CD8-positive, alpha-beta memory T cell (primary cell): ENCODE measurements at regions of chr7 and their contacts with region 1.

Region 1: GRCh38 chr7:74401137-74401859 is 52.4 kb upstream of the GTF2IRD1 start:
- DNase-seq: peak; percentile 49 to 77 (median 59)
- H3K4me3 ChIP-seq: no peak overlapping the region
- H3K4me3 Mint-ChIP-seq: no peak overlapping the region
- H3K27ac ChIP-seq: no peak overlapping the region
- H3K27ac Mint-ChIP-seq: no peak overlapping the region
- H3K4me1 ChIP-seq: no peaks in the 10 kb centered on the region
- H3K4me1 Mint-ChIP-seq: peaks cover 0 to 2% (median 0%) of the 10 kb centered on the region in 3 donors
- H3K27me3 ChIP-seq: no peaks in the 10 kb centered on the region
- H3K27me3 Mint-ChIP-seq: no peaks in the 10 kb centered on the region

Region 2: DNA sequence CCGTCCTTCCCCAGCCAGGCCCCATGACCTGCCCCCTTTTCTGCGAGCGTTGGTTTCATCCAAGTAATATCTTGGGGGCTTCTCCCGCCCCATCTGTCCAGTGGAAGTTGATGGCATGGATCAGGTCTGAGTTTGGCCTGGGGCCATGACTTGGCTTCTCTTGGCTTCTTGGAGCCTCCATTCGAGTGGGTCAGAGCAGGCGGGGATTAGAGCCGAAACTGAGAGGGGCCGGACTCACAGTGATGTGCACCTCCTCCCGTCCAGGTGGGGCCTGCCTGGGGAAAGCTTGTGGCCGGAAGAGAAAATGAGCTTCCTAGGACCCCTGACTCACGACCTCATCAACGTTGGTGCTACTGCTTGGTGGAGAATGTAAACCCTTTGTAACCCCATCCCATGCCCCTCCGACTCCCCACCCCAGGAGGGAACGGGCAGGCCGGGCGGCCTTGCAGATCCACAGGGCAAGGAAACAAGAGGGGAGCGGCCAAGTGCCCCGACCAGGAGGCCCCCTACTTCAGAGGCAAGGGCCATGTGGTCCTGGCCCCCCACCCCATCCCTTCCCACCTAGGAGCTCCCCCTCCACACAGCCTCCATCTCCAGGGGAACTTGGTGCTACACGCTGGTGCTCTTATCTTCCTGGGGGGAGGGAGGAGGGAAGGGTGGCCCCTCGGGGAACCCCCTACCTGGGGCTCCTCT is 332.8 kb before region 1 on chr7:
- CTCF ChIA-PET with region 1: interaction called, 54 read pairs
- POLR2A ChIA-PET with region 1: no interaction called
- DNase-seq: no peak
- H3K4me3 ChIP-seq: no peak overlapping the region
- H3K4me3 Mint-ChIP-seq: no peak overlapping the region
- H3K27ac ChIP-seq: no peak overlapping the region
- H3K27ac Mint-ChIP-seq: peak overlapping the region in 2 of 8 donors; percentile 68 to 90
- H3K4me1 ChIP-seq: peaks cover 3% of the 10 kb centered on the region
- H3K4me1 Mint-ChIP-seq: no peaks in the 10 kb centered on the region
- H3K27me3 ChIP-seq: no peaks in the 10 kb centered on the region
- H3K27me3 Mint-ChIP-seq: peaks cover 0 to 1% of the 10 kb centered on the region in 2 donors

Region 3: GRCh38 chr7:74212656-74213055 is 188.6 kb before region 1 on chr7:
- CTCF ChIA-PET with region 1: interaction called, 82 read pairs
- POLR2A ChIA-PET with region 1: no interaction called
- DNase-seq: no peak
- H3K4me3 ChIP-seq: no peak overlapping the region
- H3K4me3 Mint-ChIP-seq: no peak overlapping the region
- H3K27ac ChIP-seq: no peak overlapping the region
- H3K27ac Mint-ChIP-seq: no peak overlapping the region
- H3K4me1 ChIP-seq: peaks cover 8% of the 10 kb centered on the region
- H3K4me1 Mint-ChIP-seq: peaks cover 9 to 19% (median 9%) of the 10 kb centered on the region in 3 donors
- H3K27me3 ChIP-seq: no peaks in the 10 kb centered on the region
- H3K27me3 Mint-ChIP-seq: peaks cover 4 to 7% of the 10 kb centered on the region in 2 donors

Region 4: DNA sequence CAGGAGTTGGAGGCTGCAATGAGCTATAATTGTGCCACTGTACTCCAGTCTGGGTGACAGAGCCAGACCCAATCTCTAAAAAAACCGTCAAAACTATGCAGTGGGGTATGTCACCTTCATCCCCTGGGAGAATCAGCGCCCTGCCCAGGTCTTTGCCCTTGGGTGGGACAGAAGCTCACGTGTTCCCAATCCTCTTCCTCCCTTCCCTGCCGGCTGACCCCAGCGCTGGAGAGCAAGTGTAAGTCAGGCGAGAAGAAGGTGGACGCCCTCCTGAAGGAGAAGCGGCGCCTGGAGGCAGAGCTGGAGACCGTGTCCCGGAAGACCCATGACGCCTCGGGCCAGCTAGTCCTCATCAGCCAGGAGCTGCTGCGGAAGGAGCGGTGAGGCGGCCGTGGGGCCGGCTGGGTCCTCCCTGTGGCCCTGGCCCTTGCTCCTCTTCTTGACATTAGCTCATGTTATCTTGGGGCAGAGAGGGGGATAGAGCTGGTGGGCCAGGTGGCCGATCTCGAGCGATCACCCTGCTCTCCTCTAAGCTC is 12.3 kb before region 1 on chr7:
- CTCF ChIA-PET with region 1: interaction called, 14 read pairs
- POLR2A ChIA-PET with region 1: no interaction called
- DNase-seq: no peak
- H3K4me3 ChIP-seq: no peak overlapping the region
- H3K4me3 Mint-ChIP-seq: no peak overlapping the region
- H3K27ac ChIP-seq: no peak overlapping the region
- H3K27ac Mint-ChIP-seq: no peak overlapping the region
- H3K4me1 ChIP-seq: no peaks in the 10 kb centered on the region
- H3K4me1 Mint-ChIP-seq: no peaks in the 10 kb centered on the region
- H3K27me3 ChIP-seq: no peaks in the 10 kb centered on the region
- H3K27me3 Mint-ChIP-seq: no peaks in the 10 kb centered on the region